GM10248 (cell line): ENCODE measurements at regions of chr19 and their contacts with region 1.

Region 1: DNA sequence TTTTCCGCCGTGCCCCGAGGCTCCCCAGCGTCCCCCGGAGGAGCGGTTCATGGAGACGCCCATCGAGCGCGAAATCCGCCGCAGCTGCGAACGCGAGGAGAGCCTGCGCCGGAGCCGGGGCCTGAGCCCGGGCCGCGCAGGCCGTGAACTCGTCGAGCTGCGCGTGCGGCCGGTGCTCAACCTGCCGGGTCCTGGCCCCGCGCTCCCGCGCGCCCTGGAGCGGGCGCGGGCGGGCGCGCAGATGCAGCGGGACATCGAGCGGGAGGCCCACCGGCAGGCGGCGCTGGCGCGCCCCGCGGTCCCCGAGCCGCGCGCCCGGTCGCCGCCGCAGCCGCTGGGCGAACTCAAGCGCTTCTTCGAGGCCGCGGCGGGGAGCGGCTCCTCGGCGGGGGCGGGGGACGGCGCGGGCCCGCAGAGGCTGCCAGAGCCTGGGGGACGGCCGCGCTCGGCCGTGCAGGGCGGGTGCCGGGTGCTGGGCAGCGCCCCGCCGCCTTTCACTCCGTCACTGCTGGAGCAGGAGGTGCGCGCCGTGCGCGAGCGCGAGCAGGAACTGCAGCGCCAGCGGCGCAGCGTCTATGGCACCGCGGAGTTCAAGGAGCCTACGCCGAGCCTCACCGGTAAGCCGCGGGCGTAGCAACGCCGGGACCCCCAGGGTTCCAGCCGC is 807 bp downstream of the MISP3 start:
- DNase-seq: peak; percentile 83
- CTCF ChIP-seq: peak; percentile 90

Region 2: DNA sequence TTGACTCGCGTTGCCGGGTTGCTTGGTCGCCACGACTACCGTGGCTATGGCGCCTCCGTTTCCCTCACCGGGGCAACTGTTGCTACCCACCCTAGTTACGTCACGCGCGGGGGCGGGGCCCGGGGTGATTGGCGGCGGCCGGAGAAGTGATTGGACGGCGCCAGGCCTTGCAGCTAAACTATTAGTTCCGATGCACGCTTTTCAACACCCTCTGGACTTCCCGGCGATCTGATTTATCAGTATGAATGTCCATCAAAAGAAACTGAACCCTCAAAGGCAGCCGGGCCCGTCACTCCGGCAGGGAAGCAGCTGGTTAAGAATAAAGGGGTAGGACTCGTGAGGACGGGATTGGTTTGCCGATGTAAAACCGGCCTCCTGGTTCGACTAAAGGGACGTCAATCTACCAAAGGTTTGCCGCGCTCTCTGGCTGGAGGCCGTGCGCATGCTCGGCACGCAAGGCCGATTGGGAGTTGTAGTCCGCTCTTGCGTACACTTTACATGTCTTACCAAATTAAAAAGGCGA is 67.1 kb before region 1 on chr19 and contains the start of gene RFX1:
- CTCF ChIA-PET with region 1: no interaction called
- POLR2A ChIA-PET with region 1: no interaction called
- DNase-seq: peak; percentile 92
- CTCF ChIP-seq: no peak

Region 3: DNA sequence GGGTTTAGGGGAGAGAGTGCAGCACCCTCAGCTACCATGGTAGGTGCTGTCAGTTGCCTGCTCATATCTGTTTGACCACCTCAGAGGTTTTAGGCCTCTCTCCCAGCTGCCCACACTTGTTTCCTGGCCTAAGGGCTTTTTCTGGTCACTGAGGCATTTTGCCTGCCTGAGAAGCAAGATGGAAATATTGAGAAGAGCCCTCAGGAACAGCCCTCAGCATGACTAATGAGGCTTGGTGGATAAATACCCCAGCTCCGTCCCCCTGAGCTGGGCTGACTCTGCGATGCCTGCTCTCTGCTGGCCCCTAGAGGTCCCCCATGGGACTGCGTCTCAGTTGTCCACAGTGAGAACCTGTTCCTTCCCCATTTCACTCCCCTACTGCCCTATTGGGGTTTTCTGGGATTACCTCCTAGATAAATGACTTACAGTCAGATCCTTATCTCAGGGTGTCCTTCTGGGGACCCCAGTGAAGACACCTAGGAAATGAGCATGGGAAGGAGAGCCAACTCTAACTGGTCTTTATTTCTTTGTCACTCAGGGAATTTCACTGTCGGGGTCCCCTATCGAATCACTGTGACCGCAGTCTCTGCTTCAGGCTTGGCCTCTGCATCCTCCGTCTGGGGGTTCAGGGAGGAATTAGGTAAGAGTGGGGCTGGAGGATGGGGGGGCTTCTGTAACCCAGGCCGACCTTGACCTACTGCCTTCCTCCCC is 24.8 kb before region 1 on chr19:
- CTCF ChIA-PET with region 1: interaction called, 26 read pairs
- POLR2A ChIA-PET with region 1: no interaction called
- DNase-seq: peak; percentile 75
- CTCF ChIP-seq: peak; percentile 74

Region 4: DNA sequence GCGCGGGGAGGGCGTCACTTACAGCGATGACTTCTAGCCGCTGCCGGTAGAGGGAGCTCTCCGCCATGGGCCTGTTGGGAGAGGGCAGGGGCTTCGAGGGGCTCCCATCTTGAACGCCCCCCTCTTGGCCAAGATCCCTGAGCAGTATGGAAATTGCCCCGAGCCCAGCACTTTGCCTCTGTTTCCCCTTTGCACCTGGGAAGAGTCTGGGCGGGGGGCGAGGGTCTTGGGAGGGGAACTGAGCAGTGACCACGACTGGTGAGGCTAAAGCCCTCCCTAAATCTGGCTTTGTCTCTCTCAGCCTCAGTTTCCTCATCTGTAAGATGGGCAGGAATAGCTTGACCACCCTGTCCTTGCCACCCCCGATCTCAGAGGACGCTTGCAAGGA is 14.3 kb before region 1 on chr19:
- CTCF ChIA-PET with region 1: interaction called, 106 read pairs
- POLR2A ChIA-PET with region 1: no interaction called
- DNase-seq: peak; percentile 77
- CTCF ChIP-seq: peak; percentile 71

Region 5: GRCh38 chr19:14089662-14090508 is 16.5 kb after region 1 on chr19:
- CTCF ChIA-PET with region 1: interaction called, 12 read pairs
- POLR2A ChIA-PET with region 1: no interaction called
- DNase-seq: peak; percentile 45
- CTCF ChIP-seq: peak; percentile 33

Region 6: DNA sequence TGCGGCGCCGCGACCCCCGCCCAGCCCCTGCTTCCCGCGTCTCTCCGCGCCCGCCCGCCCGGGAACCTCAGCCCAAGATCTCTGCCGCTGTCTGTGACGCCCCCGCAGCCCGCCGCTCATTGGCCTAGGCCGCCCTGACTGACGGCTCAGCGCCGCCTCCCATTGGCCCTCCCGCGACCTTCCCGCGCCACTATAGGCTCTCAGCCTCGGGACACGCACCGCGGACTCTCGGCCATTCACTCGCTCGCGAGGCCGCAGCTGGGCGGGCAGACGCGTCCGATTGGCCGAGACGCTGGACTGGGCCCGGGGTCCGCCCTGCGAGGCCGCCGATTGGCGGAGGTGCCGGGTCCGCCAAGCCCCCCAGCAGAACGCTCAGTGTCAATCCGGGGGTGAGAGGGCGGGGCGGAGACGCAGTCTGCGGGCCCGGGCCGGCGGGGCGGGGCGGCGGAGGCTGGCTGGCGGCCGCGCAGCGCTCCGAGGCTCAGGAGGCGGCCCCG is 44.3 kb after region 1 on chr19 and contains the start of gene PRKACA:
- CTCF ChIA-PET with region 1: interaction called, 14 read pairs
- POLR2A ChIA-PET with region 1: no interaction called
- DNase-seq: peak; percentile 99
- CTCF ChIP-seq: no peak

Region 7: DNA sequence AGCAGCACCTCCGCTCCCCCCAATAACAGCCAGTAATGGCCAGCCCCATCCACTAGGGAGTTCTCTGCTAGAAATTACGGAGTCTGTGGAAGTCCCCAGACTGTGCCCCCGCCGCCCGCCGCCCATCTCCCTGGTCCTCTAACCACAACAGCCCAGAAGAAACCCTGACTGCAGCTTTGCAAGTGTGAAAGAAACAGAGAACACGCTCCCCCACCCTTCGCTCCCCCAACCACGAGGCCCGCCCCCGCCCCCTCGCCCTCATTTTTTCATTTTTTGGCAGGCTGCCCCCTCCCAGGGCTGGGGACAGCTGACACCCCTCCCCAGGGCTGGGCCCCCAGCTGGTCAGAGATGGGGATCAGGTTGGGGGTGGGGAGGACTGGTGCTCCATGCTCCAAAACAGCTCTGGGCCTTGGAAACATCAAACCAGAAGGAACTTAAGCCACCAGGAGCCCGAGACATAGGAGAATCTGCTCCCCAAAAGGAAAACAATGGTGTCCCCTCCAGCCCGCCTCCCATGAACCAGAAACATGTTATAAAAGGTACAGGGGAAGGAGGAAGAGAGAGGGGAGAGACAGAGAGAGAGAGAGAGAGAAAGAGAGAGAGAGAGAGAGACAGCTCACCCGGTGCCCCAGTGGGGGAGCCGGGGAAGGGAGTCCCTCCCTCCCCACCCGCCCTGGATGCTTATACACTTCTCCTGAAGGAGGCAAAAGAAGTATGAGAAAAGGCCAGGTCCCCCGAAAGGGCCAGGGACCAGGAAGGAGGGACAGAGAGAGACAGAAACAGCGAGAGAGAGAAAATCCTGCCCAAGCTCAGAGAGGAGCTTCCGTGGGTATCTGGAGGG is 92.8 kb after region 1 on chr19:
- CTCF ChIA-PET with region 1: no interaction called
- POLR2A ChIA-PET with region 1: no interaction called
- DNase-seq: no peak
- CTCF ChIP-seq: no peak

Region 8: GRCh38 chr19:15838351-15838750 is 1765.0 kb after region 1 on chr19:
- CTCF ChIA-PET with region 1: no interaction called
- POLR2A ChIA-PET with region 1: interaction called, 10 read pairs
- DNase-seq: no peak
- CTCF ChIP-seq: no peak